Left colon (tissue), 2 donors: ENCODE measurements at regions of chr7 and their contacts with region 1.

Region 1: GRCh38 chr7:26356929-26357798 is 65.5 kb downstream of the SNX10 start:
- DNase-seq: no peak
- ATAC-seq: no peak

Region 2: DNA sequence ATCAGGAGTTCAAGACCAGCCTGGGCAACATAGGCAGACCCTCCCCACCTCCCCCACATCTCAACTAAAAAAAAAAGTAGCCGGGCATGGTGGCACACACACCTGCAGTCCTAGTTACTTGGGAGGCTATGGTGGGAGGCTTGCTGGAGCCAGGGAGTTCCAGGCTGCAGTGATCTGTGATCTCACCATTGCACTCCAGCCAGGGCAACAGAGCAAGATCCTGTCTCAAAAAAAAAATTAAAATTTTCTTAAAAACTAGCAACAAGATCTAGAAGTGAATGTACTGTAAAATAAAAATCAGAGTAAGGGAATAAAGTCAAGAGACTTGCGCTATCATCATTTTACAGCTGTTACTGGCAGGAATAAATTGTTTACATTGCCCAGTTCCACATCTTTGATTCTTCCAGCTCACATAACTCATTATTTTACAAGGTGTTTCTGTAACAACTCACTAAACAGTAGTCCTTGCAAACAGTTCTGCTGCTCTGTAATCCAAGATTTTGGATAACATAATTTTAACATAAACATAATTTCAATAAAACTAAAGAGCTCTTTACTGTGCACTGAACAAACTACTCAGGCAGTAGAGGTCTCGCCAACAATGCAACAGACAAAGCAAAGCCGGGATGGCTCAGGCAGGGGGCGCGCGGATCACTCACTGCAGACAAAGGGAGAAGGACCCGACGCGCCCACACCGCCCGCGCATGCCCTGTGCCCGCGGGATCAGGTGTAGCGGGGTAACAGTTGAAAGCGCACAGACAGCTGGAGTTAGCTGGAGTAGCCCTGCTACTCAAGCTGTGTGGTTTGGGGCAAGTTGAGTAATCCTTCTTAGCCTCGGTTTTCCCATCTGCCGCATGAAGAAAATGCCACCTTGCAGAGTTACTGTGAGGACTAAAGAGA is 278.5 kb before region 1 on chr7:
- intact Hi-C with region 1: no loop called
- DNase-seq: peak; percentile 74 to 84
- ATAC-seq: peak; percentile 82

Region 3: DNA sequence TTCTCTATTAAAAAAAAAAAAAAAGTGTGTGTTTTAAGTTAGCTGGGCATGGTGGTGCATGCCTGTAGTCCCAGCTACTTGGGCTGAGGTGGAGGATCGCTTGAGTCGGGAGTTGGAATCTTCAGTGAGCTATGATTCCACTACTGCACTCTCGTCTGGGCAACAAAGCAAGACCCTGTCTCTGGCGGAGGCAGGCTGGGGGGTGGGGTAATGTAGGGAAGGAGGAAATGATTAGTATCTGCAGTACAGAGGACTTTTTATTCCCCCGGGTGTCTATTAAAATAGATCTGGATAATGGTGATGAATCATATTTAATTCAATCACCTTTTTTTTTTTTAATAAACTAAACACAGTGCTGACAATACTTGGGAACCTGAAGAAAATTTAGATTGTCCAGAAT is 149.1 kb before region 1 on chr7:
- intact Hi-C with region 1: loop called in 1 of 2 experiments (anchors 5 kb)
- DNase-seq: no peak
- ATAC-seq: no peak